Right cardiac atrium (tissue), 5 donors: ENCODE measurements at regions of chr20 and their contacts with region 1.

Region 1: GRCh38 chr20:35303735-35304491 is 11.7 kb upstream of the FAM83C start:
- DNase-seq: peak; percentile 72 to 89 (median 79)
- ATAC-seq: peak; percentile 49 to 69
- H3K4me3 ChIP-seq: no peak overlapping the region
- H3K27ac ChIP-seq: no peak overlapping the region
- H3K4me1 ChIP-seq: peaks cover 14% of the 10 kb centered on the region
- H3K27me3 ChIP-seq: no peaks in the 10 kb centered on the region

Region 2: GRCh38 chr20:35344354-35344837 is 40.5 kb after region 1 on chr20:
- intact Hi-C with region 1: no loop called
- DNase-seq: peak; percentile 76 to 89 (median 85)
- ATAC-seq: peak; percentile 86 to 88
- H3K4me3 ChIP-seq: no peak overlapping the region
- H3K27ac ChIP-seq: peak overlapping the region; percentile 39
- H3K4me1 ChIP-seq: peaks cover 5% of the 10 kb centered on the region
- H3K27me3 ChIP-seq: no peaks in the 10 kb centered on the region

Region 3: DNA sequence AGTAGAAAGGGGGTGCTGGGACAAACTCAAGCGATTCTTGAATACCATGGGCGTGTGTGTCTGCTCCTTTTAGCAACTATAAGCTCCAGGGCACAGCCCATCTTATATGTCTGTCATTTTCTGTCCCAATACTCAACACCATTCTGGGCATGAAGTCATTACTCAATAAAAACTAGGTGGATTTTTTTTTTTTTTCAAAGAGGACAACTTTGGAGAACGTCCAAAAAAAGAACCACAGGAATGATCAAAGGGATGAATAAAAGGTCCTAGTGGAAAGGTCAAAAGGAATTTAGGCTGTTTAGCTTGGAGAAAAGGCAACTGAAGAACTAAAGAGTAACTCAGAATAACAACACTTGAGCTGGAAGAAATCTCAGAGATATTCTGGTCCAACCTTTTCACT is 83.4 kb after region 1 on chr20:
- intact Hi-C with region 1: no loop called
- DNase-seq: no peak
- ATAC-seq: no peak
- H3K4me3 ChIP-seq: no peak overlapping the region
- H3K27ac ChIP-seq: no peak overlapping the region
- H3K4me1 ChIP-seq: no peaks in the 10 kb centered on the region
- H3K27me3 ChIP-seq: no peaks in the 10 kb centered on the region

Region 4: DNA sequence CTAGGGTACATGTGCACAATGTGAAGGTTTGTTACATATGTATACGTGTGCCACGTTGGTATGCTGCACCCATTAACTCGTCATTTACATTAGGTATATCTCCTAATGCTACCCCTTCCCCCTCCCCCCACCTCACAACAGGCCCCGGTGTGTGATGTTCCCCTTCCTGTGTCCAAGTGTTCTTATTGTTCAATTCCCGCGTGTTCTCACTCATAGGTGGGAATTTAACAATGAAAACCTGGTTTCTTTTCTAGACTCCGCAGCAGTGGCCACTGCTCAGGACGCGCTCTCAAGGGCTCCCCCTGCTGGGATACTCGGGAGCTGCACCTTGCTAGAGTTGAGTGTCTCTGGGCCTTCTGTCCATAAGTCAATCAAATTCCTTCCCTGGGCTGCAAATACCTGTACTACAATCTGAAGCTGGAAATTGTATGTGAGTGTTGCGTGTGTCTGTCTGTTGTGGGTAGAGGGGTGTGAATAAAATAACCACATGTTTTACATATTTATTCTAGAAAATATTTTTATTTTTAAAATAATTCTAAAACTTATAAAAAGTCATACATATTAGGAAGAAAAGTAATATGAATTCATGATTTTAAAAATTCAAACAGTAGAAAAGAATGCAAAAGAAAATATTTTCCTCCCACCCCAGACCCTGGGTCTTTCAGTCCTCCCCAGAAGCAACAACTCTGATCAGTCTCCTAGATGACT is 143.3 kb after region 1 on chr20:
- intact Hi-C with region 1: loop called (anchors 5 kb)
- DNase-seq: peak; percentile 77 to 94 (median 92)
- ATAC-seq: peak; percentile 83 to 88
- H3K4me3 ChIP-seq: peak overlapping the region; percentile 9
- H3K27ac ChIP-seq: no peak overlapping the region
- H3K4me1 ChIP-seq: no peaks in the 10 kb centered on the region
- H3K27me3 ChIP-seq: no peaks in the 10 kb centered on the region